ENCODE measurements at regions of chr6 and their contacts with region 1.

Region 1: GRCh38 chr6:147750413-147750812 is 241.9 kb downstream of the SAMD5 start:
- DNase-seq: no peak

Region 2: DNA sequence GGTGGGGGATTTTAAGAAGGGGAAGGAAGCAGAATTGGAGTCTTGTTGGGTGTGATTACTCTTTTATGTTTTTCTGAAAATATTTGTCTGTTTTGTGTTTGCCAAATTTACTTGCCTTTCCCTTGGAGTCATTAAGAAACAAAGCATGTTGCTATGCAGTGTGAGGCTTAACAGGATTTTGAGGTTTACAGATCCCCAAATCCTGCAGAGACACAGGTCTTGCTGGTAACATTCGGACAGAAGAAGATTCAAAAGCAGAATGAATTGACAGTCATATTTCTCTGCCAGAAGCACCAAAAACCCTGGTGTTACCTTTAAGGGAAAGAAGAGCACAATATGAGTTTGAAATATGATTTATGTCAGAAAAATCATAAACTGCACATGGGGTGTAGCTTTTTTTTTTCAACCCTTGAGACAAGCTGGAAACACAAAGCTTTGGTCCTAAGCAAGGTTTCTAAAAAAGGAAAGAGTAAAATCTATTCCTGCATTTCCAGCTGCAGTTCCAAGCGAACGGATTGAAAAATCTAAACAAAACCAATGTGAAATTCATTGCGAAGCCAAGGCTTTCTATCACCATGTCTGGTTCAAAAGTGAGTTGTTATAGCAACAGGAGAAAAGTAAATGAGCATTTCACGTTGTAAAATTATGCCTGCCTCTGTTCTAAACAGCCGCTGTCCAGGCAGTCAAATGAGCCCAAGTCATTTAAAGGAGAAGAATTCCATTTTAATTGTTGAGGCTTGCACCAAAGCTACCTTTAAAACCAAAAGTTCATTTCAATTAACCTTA is 233.4 kb after region 1 on chr6:
- intact Hi-C with region 1: loop called in 1 of 2 experiments (anchors 2 kb)
- DNase-seq: no peak

Region 3: DNA sequence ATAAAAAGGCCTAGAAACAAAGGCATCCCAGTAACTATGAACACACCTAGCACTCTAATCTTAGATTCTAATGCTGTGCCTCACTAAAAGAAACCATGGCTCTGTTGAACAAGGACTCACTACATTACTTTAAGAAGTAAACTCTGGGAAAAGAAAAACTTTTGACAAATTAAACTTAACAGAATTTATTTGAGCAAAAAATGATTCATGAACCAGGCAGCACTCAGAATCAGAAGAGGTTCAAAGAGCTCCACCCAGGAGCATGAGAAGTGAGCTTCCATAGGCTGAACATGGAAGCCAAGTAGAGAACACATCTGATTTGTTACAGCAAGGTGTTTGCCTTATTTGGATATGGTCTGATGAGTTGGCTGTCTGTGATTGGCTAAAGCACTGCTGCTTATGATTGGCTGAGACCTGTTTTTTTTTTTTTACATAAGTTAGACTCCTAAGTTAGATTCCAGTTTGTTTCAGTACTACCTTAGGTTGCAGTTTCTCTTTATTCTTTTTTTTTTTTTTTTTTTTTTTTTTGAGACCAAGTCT is 248.7 kb after region 1 on chr6:
- intact Hi-C with region 1: no loop called
- DNase-seq: no peak